CD8-positive, alpha-beta T cell (primary cell): ENCODE measurements at regions of chr11 and their contacts with region 1.

Region 1: DNA sequence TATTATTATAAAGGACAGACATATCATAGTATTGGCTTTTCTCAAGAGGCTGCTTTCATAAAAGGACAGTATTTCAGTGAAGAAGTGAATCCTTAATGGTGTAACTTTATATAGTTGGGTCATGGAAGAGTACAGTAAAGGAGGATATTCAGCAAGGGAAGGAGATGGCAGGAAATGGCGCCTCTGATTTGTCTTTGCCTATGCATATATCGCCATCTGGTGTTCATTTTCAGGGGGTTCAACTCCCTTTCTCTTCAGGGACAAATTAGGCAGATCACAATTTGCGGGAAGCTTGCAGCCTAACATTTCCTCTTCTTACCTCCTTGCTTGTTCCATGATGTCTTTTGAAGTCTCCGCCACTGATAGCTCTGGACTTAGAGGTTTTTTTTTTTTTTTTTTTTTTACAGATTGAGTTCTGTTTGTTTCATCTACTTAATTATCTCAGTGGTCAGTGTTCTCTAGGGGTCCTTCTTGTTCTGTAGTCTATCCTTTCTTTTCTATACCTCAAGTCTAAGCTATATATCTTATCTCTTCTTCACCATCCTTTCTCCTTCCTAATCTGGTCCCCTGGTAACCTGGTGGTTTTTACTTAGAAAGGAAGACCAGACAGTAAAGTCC is 21.8 kb upstream of the RRM1 start:
- DNase-seq: peak in 7 of 9 experiments; percentile 29 to 87 (median 46)
- ATAC-seq: peak; percentile 83
- H3K4me3 ChIP-seq: no peak overlapping the region
- H3K4me3 Mint-ChIP-seq: no peak overlapping the region
- H3K27ac ChIP-seq: peak overlapping the region in 1 of 2 experiments; percentile 49
- H3K27ac Mint-ChIP-seq: peak overlapping the region; percentile 87
- H3K4me1 ChIP-seq: peaks cover 37% of the 10 kb centered on the region
- H3K4me1 Mint-ChIP-seq: peaks cover 53% of the 10 kb centered on the region
- H3K27me3 ChIP-seq: no peaks in the 10 kb centered on the region
- H3K27me3 Mint-ChIP-seq: no peaks in the 10 kb centered on the region
- CTCF ChIP-seq: peak; percentile 87

Region 2: DNA sequence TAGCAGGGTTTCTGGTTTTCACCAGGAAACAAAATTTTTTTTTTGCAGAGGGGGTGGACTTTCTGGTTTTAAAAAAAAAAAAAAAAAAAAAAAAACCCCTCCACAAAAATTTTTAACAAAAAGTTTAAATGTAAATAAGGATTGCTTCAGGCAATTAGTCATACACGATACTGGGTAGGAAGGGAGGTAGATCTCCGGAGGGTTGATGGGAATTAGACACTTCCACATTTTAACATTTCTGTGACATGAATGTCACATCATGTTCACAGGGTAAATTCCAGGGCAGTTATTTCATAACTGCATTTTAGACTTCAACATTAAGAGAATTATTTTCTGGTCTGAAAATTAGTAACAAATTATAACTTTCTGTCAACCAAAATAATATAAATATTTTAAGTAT is 291.4 kb before region 1 on chr11:
- CTCF ChIA-PET with region 1: interaction called, 18 read pairs
- POLR2A ChIA-PET with region 1: no interaction called
- intact Hi-C with region 1: loop called (anchors 5 kb)
- DNase-seq: peak in 1 of 9 experiments; percentile 32
- ATAC-seq: no peak
- H3K4me3 ChIP-seq: no peak overlapping the region
- H3K4me3 Mint-ChIP-seq: no peak overlapping the region
- H3K27ac ChIP-seq: no peak overlapping the region
- H3K27ac Mint-ChIP-seq: no peak overlapping the region
- H3K4me1 ChIP-seq: peaks cover 34% of the 10 kb centered on the region
- H3K4me1 Mint-ChIP-seq: peaks cover 48% of the 10 kb centered on the region
- H3K27me3 ChIP-seq: no peaks in the 10 kb centered on the region
- H3K27me3 Mint-ChIP-seq: no peaks in the 10 kb centered on the region
- CTCF ChIP-seq: no peak

Region 3: DNA sequence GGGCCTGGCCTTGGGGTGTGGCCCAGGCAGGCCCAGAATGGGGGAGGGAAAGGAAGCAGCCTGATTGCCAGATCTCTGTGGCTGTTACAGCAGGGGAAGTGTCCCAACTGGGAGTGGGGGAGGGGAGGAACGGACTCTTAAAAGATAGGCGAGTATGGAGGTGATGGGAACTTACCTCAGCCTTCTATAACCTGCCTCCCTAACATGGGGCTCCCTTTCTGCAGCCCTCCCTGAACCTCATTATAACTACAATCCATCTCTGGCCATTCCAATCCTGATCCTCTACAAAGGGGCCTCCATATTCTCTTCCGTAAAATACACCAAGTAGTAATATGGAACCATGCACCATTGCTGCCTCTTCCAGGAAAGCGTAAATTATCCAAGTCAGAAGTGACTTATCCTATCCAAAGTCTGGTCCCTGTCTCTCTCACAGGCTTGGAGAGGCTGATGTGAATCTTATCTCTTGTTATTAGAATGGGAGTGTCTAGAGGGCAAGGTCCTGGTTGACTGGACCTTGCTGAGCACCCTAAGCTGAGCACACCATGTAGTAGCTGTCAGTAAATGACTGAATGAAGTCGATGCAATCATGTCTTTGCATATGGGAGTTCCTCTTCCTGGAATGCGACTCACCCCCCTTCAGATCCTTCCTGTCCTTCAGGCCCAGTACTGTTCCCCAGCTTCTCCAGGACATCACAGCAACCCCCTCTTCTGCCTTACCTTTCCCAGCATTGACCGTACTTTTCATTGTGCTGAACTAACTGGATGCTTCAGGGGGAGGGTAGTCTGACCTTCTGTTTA is 237.9 kb before region 1 on chr11:
- CTCF ChIA-PET with region 1: interaction called, 548 read pairs
- POLR2A ChIA-PET with region 1: interaction called, 20 read pairs
- intact Hi-C with region 1: no loop called
- DNase-seq: peak in 2 of 9 experiments; percentile 29 to 34
- ATAC-seq: no peak
- H3K4me3 ChIP-seq: peak overlapping the region; percentile 7 to 26
- H3K4me3 Mint-ChIP-seq: peak overlapping the region; percentile 55
- H3K27ac ChIP-seq: peak overlapping the region in 1 of 2 experiments; percentile 61
- H3K27ac Mint-ChIP-seq: peak overlapping the region; percentile 92
- H3K4me1 ChIP-seq: peaks cover 89% of the 10 kb centered on the region
- H3K4me1 Mint-ChIP-seq: peaks cover 94% of the 10 kb centered on the region
- H3K27me3 ChIP-seq: no peaks in the 10 kb centered on the region
- H3K27me3 Mint-ChIP-seq: no peaks in the 10 kb centered on the region
- CTCF ChIP-seq: no peak

Region 4: GRCh38 chr11:3867209-3868091 is 205.3 kb before region 1 on chr11:
- CTCF ChIA-PET with region 1: interaction called, 17 read pairs
- POLR2A ChIA-PET with region 1: no interaction called
- intact Hi-C with region 1: no loop called
- DNase-seq: peak in 1 of 9 experiments; percentile 39
- ATAC-seq: peak; percentile 46
- H3K4me3 ChIP-seq: no peak overlapping the region
- H3K4me3 Mint-ChIP-seq: peak overlapping the region; percentile 71
- H3K27ac ChIP-seq: peak overlapping the region in 1 of 2 experiments; percentile 66
- H3K27ac Mint-ChIP-seq: peak overlapping the region; percentile 80
- H3K4me1 ChIP-seq: peaks cover 90% of the 10 kb centered on the region
- H3K4me1 Mint-ChIP-seq: peaks cover 86% of the 10 kb centered on the region
- H3K27me3 ChIP-seq: no peaks in the 10 kb centered on the region
- H3K27me3 Mint-ChIP-seq: no peaks in the 10 kb centered on the region
- CTCF ChIP-seq: no peak

Region 5: GRCh38 chr11:3947061-3947460 is 125.7 kb before region 1 on chr11:
- CTCF ChIA-PET with region 1: interaction called, 35 read pairs
- POLR2A ChIA-PET with region 1: interaction called, 3 read pairs
- intact Hi-C with region 1: loop called (anchors 1 to 2 kb)
- DNase-seq: peak; percentile 23 to 90 (median 62)
- ATAC-seq: peak; percentile 72
- H3K4me3 ChIP-seq: peak overlapping the region; percentile 32 to 35
- H3K4me3 Mint-ChIP-seq: peak overlapping the region; percentile 75
- H3K27ac ChIP-seq: peak overlapping the region; percentile 68 to 86
- H3K27ac Mint-ChIP-seq: peak overlapping the region; percentile 95
- H3K4me1 ChIP-seq: peaks cover 95% of the 10 kb centered on the region
- H3K4me1 Mint-ChIP-seq: peaks cover 95% of the 10 kb centered on the region
- H3K27me3 ChIP-seq: no peaks in the 10 kb centered on the region
- H3K27me3 Mint-ChIP-seq: no peaks in the 10 kb centered on the region
- CTCF ChIP-seq: no peak

Region 6: GRCh38 chr11:4060182-4060923 is 12.4 kb before region 1 on chr11:
- CTCF ChIA-PET with region 1: interaction called, 21 read pairs
- POLR2A ChIA-PET with region 1: no interaction called
- intact Hi-C with region 1: no loop called
- DNase-seq: no peak
- ATAC-seq: no peak
- H3K4me3 ChIP-seq: no peak overlapping the region
- H3K4me3 Mint-ChIP-seq: no peak overlapping the region
- H3K27ac ChIP-seq: no peak overlapping the region
- H3K27ac Mint-ChIP-seq: no peak overlapping the region
- H3K4me1 ChIP-seq: peaks cover 25% of the 10 kb centered on the region
- H3K4me1 Mint-ChIP-seq: peaks cover 40% of the 10 kb centered on the region
- H3K27me3 ChIP-seq: no peaks in the 10 kb centered on the region
- H3K27me3 Mint-ChIP-seq: no peaks in the 10 kb centered on the region
- CTCF ChIP-seq: no peak

Region 7: GRCh38 chr11:4211991-4212390 is 139.2 kb after region 1 on chr11:
- CTCF ChIA-PET with region 1: no interaction called
- POLR2A ChIA-PET with region 1: no interaction called
- intact Hi-C with region 1: no loop called
- DNase-seq: no peak
- ATAC-seq: no peak
- H3K4me3 ChIP-seq: no peak overlapping the region
- H3K4me3 Mint-ChIP-seq: no peak overlapping the region
- H3K27ac ChIP-seq: no peak overlapping the region
- H3K27ac Mint-ChIP-seq: no peak overlapping the region
- H3K4me1 ChIP-seq: no peaks in the 10 kb centered on the region
- H3K4me1 Mint-ChIP-seq: no peaks in the 10 kb centered on the region
- H3K27me3 ChIP-seq: no peaks in the 10 kb centered on the region
- H3K27me3 Mint-ChIP-seq: peaks cover 26% of the 10 kb centered on the region
- CTCF ChIP-seq: no peak